B cell (primary cell): ENCODE measurements at regions of chr22 and their contacts with region 1.

Region 1: DNA sequence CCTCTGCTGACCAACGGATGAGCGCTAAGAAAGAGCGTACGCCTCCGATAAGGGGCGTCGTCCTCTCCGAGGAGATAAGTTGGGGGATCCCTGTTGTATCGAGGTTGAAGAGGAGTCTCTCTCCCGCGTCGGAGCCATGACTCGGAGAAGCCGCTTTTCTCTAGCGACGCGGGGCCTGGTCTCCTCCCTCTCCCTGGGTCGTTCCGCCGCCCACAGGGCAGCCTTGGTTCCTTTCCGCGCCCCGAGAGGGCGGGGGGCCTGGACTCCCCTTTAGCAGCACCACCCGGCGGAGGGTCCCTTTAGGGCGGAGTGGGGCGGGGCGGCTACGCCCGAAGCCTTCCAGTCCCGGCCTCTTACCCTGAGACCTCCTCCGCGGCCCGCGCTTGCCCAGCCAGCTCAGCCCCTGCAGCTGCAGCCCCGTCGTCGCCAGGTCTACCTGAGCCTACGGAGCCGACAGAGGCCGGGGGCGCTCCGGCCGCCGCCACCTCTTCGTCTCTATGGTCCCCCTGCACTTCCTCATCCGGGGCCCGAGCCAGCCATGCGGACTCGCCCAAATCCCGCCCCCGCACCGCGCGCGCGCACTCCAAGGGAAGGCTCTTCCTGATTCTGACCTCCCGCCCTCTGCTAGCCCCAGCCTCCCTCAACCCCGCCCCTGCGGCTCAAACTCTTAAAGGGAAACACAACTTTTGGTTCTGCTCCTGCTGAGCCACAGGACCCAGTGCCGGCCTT is at the start of gene PRR14L:
- DNase-seq: peak; percentile 99
- ATAC-seq: peak; percentile 74
- H3K4me3 ChIP-seq: peak within 1 kb of the TSS; percentile 81 to 95 (median 83)
- H3K4me3 Mint-ChIP-seq: peak within 1 kb of the TSS; percentile 95
- H3K27ac ChIP-seq: peak within 1 kb of the TSS; percentile 72 to 93
- H3K27ac Mint-ChIP-seq: peak within 1 kb of the TSS; percentile 99
- H3K4me1 ChIP-seq: peaks cover 41 to 43% of the 10 kb centered on the region in 2 donors
- H3K4me1 Mint-ChIP-seq: peaks cover 52% of the 10 kb centered on the region
- H3K27me3 ChIP-seq: no peaks in the 10 kb centered on the region
- H3K27me3 Mint-ChIP-seq: no peaks in the 10 kb centered on the region
- CTCF ChIP-seq: peak; percentile 17
- total RNA-seq, gene PRR14L: 69.6 and 78.5 TPM in 2 replicates

Region 2: GRCh38 chr22:31345331-31346254 is 404.2 kb before region 1 on chr22:
- CTCF ChIA-PET with region 1: no interaction called
- POLR2A ChIA-PET with region 1: interaction called, 3 read pairs
- intact Hi-C with region 1: loop called (anchors 2 kb)
- DNase-seq: peak; percentile 94
- ATAC-seq: peak; percentile 65
- H3K4me3 ChIP-seq: peak overlapping the region in 4 of 5 experiments; percentile 62 to 74 (median 70)
- H3K4me3 Mint-ChIP-seq: peak overlapping the region; percentile 81
- H3K27ac ChIP-seq: peak overlapping the region; percentile 36 to 63
- H3K27ac Mint-ChIP-seq: peak overlapping the region; percentile 86
- H3K4me1 ChIP-seq: peaks cover 32 to 53% of the 10 kb centered on the region in 2 donors
- H3K4me1 Mint-ChIP-seq: peaks cover 51% of the 10 kb centered on the region
- H3K27me3 ChIP-seq: no peaks in the 10 kb centered on the region
- H3K27me3 Mint-ChIP-seq: no peaks in the 10 kb centered on the region
- CTCF ChIP-seq: peak; percentile 79

Region 3: DNA sequence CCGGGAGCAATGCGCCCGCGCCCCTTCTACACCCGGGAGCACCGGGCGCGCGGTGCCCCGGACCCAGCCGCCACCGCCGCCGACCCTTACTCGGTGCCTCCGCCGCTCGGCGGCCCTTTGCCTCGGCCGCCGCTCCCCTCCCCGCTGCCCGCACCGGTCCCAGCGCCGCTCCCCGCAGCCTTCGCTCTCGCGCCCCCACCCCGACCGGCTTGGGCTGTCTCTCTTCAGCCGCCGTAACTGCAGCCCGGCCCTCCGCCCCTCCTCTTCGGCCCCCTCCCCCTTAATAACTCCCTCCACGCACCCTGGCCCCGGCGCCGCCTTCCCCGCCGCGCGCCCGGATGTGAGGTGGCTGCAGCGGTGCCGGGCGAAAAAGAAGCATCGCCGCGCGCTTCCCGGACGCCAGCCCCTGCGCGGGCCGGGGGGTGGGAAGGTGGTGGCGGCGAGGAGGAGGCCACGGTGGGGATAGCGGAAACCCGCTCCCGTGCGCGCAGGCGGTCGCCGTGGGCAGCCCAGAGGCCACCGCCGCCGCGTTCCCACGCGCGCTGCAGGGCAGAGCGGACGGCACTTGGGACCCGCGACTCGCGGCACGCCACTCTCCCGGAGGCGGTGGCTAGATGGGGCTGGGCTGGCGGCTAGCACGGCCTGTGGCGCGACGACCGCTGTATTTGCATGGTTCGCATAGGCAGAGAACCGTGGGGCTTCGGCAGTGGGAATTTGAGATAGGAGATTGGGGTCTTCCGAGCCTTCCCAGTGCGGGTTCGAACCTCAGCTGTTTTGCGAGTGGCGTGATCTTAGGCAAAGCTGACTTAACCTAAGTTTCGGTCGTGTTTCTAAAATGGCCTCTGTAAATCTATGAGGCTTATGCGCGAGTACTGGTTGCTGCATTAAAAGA is 259.9 kb before region 1 on chr22 and contains the start of gene EIF4ENIF1:
- CTCF ChIA-PET with region 1: no interaction called
- POLR2A ChIA-PET with region 1: interaction called, 7 read pairs
- intact Hi-C with region 1: loop called (anchors 1 kb)
- DNase-seq: peak; percentile 93
- ATAC-seq: peak; percentile 67
- H3K4me3 ChIP-seq: peak within 1 kb of the TSS; percentile 67 to 100 (median 84)
- H3K4me3 Mint-ChIP-seq: peak within 1 kb of the TSS; percentile 91
- H3K27ac ChIP-seq: peak within 1 kb of the TSS; percentile 93 to 99
- H3K27ac Mint-ChIP-seq: peak within 1 kb of the TSS; percentile 98
- H3K4me1 ChIP-seq: peaks cover 29 to 47% of the 10 kb centered on the region in 2 donors
- H3K4me1 Mint-ChIP-seq: peaks cover 52% of the 10 kb centered on the region
- H3K27me3 ChIP-seq: no peaks in the 10 kb centered on the region
- H3K27me3 Mint-ChIP-seq: no peaks in the 10 kb centered on the region
- CTCF ChIP-seq: no peak
- total RNA-seq, gene EIF4ENIF1: 58.3 and 62.7 TPM in 2 replicates

Region 4: GRCh38 chr22:31676700-31677099 is 73.1 kb before region 1 on chr22:
- CTCF ChIA-PET with region 1: interaction called, 5 read pairs
- POLR2A ChIA-PET with region 1: interaction called, 8 read pairs
- intact Hi-C with region 1: loop called (anchors 1 kb)
- DNase-seq: peak; percentile 92
- ATAC-seq: peak; percentile 100
- H3K4me3 ChIP-seq: peak overlapping the region; percentile 48 to 79 (median 70)
- H3K4me3 Mint-ChIP-seq: peak overlapping the region; percentile 88
- H3K27ac ChIP-seq: peak overlapping the region; percentile 55 to 85
- H3K27ac Mint-ChIP-seq: peak overlapping the region; percentile 90
- H3K4me1 ChIP-seq: peaks cover 10 to 28% of the 10 kb centered on the region in 2 donors
- H3K4me1 Mint-ChIP-seq: peaks cover 26% of the 10 kb centered on the region
- H3K27me3 ChIP-seq: no peaks in the 10 kb centered on the region
- H3K27me3 Mint-ChIP-seq: no peaks in the 10 kb centered on the region
- CTCF ChIP-seq: no peak

Region 5: GRCh38 chr22:31734512-31734911 is 15.3 kb before region 1 on chr22:
- CTCF ChIA-PET with region 1: no interaction called
- POLR2A ChIA-PET with region 1: no interaction called
- intact Hi-C with region 1: no loop called
- DNase-seq: no peak
- ATAC-seq: no peak
- H3K4me3 ChIP-seq: no peak overlapping the region
- H3K4me3 Mint-ChIP-seq: no peak overlapping the region
- H3K27ac ChIP-seq: no peak overlapping the region
- H3K27ac Mint-ChIP-seq: no peak overlapping the region
- H3K4me1 ChIP-seq: no peaks in the 10 kb centered on the region
- H3K4me1 Mint-ChIP-seq: peaks cover 9% of the 10 kb centered on the region
- H3K27me3 ChIP-seq: no peaks in the 10 kb centered on the region
- H3K27me3 Mint-ChIP-seq: no peaks in the 10 kb centered on the region
- CTCF ChIP-seq: no peak